AG04450 (cell line): ENCODE measurements at regions of chr1 and their contacts with region 1.

Region 1: GRCh38 chr1:86856196-86856595 is 57.7 kb downstream of the SELENOF start:
- DNase-seq: no peak
- H3K4me3 ChIP-seq: no peak overlapping the region
- H3K27ac ChIP-seq: no peak overlapping the region
- H3K27me3 ChIP-seq: no peaks in the 10 kb centered on the region
- CTCF ChIP-seq: no peak

Region 2: GRCh38 chr1:86833461-86834215 is 22.6 kb before region 1 on chr1:
- CTCF ChIA-PET with region 1: interaction called, 10 read pairs
- POLR2A ChIA-PET with region 1: no interaction called
- DNase-seq: peak; percentile 74
- H3K4me3 ChIP-seq: no peak overlapping the region
- H3K27ac ChIP-seq: no peak overlapping the region
- H3K27me3 ChIP-seq: no peaks in the 10 kb centered on the region
- CTCF ChIP-seq: peak; percentile 60